ENCODE measurements at regions of chr22 and their contacts with region 1.

Region 1: DNA sequence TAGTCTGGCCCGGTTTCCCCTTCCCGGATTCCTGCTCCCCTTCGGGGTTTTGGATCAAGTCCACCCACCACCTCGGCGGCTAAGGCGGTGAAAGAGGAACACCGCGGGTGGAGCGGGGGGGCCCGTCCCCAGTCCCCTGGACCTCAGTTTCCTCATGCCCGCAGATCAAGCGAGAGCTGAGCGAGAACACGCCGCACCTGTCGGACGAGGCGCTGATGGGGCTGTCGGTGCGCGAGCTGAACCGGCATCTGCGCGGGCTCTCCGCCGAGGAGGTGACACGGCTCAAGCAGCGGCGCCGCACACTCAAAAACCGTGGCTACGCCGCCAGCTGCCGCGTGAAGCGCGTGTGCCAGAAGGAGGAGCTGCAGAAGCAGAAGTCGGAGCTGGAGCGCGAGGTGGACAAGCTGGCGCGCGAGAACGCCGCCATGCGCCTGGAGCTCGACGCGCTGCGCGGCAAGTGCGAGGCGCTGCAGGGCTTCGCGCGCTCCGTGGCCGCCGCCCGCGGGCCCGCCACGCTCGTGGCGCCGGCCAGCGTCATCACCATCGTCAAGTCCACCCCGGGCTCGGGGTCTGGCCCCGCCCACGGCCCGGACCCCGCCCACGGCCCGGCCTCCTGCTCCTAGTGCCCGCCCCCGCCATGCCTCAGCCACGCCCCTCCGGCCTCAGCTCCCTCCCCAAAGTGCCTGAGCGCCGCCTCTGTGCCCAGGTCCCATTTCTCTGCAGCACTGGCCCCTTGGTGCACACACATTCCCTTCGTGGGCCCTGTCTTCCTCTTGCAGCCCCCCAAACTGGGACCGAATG is 12.7 kb downstream of the MAFF start:
- DNase-seq: peak; percentile 47 to 77
- ATAC-seq: peak in 6 of 8 donors; percentile 19 to 72 (median 36)
- H3K4me3 ChIP-seq: peak overlapping the region in 7 of 10 donors; percentile 14 to 37 (median 28)
- H3K27ac ChIP-seq: peak overlapping the region in 4 of 10 donors; percentile 13 to 58 (median 28)
- H3K4me1 ChIP-seq: peaks cover 16 to 40% (median 32%) of the 10 kb centered on the region in 9 donors
- H3K27me3 ChIP-seq: no peaks in the 10 kb centered on the region
- CTCF ChIP-seq: peak in 5 of 9 donors; percentile 13 to 33 (median 20)

Region 2: DNA sequence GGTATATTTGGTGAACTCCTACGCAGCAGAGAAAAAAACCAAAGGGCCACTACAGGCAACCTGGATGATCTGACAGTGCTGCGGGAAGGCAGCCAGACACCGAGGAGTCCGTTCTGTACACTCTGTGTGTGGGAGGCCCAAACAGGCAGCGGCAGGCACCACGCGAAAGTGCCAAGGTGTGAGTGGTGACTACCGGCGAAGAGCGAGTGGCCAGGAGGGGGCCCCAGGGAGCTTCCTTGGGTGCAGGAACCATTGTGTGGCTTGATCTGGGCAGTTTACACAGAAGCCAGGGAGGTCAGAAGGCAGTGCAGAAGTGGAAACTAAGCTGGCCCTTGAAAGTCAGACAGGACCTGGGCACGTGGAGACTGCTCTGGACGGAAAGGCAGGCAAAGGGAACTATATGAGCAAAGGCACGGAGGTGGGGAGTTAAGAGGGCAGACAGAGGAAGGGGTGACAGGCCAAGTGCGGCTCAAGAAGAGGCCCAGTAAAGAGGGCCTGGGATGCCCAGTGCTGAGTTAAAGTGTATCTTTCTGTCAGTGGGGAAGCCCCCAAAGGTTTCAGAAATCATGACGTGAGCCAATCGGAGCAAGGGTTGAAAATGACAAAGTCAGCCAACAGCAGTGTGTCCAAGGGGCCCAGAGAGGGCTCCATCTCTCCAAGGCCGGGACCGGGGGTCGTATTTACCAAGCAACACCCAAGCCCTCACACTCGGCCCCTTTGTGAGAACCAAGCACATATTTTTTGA is 47.8 kb after region 1 on chr22:
- intact Hi-C with region 1: loop called in 1 of 10 experiments (anchors 5 kb)
- DNase-seq: peak in 1 of 2 donors; percentile 69
- ATAC-seq: peak; percentile 31 to 55 (median 44)
- H3K4me3 ChIP-seq: no peak overlapping the region
- H3K27ac ChIP-seq: peak overlapping the region; percentile 21 to 93 (median 80)
- H3K4me1 ChIP-seq: peaks cover 33 to 96% (median 87%) of the 10 kb centered on the region in 9 donors
- H3K27me3 ChIP-seq: no peaks in the 10 kb centered on the region
- CTCF ChIP-seq: peak; percentile 39 to 75 (median 63)

Region 3: GRCh38 chr22:38298312-38299000 is 84.0 kb after region 1 on chr22:
- intact Hi-C with region 1: no loop called
- DNase-seq: no peak
- ATAC-seq: peak in 3 of 8 donors; percentile 8 to 29 (median 25)
- H3K4me3 ChIP-seq: no peak overlapping the region
- H3K27ac ChIP-seq: no peak overlapping the region
- H3K4me1 ChIP-seq: peaks cover 3 to 43% (median 14%) of the 10 kb centered on the region in 9 donors
- H3K27me3 ChIP-seq: no peaks in the 10 kb centered on the region
- CTCF ChIP-seq: peak in 7 of 9 donors; percentile 21 to 56 (median 41)